Calu3 (cell line): ENCODE measurements at regions of chr12 and their contacts with region 1.

Region 1: GRCh38 chr12:25130741-25131188 is 64.2 kb downstream of the DNAI7 start:
- DNase-seq: no peak
- H3K4me3 Mint-ChIP-seq: no peak overlapping the region
- H3K27ac Mint-ChIP-seq: no peak overlapping the region
- H3K4me1 Mint-ChIP-seq: no peaks in the 10 kb centered on the region
- H3K27me3 Mint-ChIP-seq: no peaks in the 10 kb centered on the region
- CTCF ChIP-seq: no peak

Region 2: GRCh38 chr12:24852420-24852819 is 278.3 kb before region 1 on chr12:
- CTCF ChIA-PET with region 1: no interaction called
- intact Hi-C with region 1: loop called (anchors 2 kb)
- DNase-seq: no peak
- H3K4me3 Mint-ChIP-seq: no peak overlapping the region
- H3K27ac Mint-ChIP-seq: no peak overlapping the region
- H3K4me1 Mint-ChIP-seq: no peaks in the 10 kb centered on the region
- H3K27me3 Mint-ChIP-seq: peaks cover 12% of the 10 kb centered on the region
- CTCF ChIP-seq: peak; percentile 18

Region 3: DNA sequence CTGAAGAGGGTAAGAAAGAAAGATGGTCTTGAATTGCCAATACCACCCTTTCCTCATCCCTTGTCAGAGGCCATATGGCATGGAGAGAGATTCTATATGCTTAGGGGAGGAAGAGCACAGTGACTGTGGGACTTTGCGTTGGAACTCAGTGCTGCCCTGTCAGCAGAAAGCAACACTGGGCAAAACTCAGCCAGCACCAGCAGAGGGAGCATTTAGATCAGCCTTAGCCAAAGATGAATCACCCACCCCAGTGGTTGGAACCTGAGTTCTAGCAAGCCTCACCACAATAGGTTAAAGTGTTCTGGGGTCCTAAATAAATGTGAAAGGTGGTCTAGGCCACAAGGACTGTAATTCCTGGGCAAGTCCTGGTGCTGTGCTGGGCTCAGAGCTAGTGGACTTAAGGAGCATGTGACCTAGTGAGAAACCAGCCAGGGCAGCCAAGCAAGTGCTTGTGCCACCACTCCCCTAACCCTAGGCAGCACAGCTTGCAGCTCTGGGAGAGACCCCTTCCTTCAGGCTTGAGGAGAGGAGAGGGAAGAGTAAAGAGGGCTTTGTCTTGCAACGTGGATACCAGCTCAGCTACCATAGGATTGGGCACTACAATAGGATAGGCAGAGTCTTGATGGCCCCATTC is 170.4 kb before region 1 on chr12:
- CTCF ChIA-PET with region 1: no interaction called
- intact Hi-C with region 1: loop called (anchors 1 kb)
- DNase-seq: peak; percentile 48
- H3K4me3 Mint-ChIP-seq: no peak overlapping the region
- H3K27ac Mint-ChIP-seq: no peak overlapping the region
- H3K4me1 Mint-ChIP-seq: no peaks in the 10 kb centered on the region
- H3K27me3 Mint-ChIP-seq: no peaks in the 10 kb centered on the region
- CTCF ChIP-seq: peak; percentile 35

Region 4: GRCh38 chr12:24991209-24992049 is 139.3 kb before region 1 on chr12:
- CTCF ChIA-PET with region 1: interaction called, 6 read pairs
- intact Hi-C with region 1: loop called (anchors 1 kb)
- DNase-seq: peak; percentile 8
- H3K4me3 Mint-ChIP-seq: no peak overlapping the region
- H3K27ac Mint-ChIP-seq: no peak overlapping the region
- H3K4me1 Mint-ChIP-seq: no peaks in the 10 kb centered on the region
- H3K27me3 Mint-ChIP-seq: peaks cover 34% of the 10 kb centered on the region
- CTCF ChIP-seq: peak; percentile 20